H1 (cell line): ENCODE measurements at regions of chr11 and their contacts with region 1.

Region 1: DNA sequence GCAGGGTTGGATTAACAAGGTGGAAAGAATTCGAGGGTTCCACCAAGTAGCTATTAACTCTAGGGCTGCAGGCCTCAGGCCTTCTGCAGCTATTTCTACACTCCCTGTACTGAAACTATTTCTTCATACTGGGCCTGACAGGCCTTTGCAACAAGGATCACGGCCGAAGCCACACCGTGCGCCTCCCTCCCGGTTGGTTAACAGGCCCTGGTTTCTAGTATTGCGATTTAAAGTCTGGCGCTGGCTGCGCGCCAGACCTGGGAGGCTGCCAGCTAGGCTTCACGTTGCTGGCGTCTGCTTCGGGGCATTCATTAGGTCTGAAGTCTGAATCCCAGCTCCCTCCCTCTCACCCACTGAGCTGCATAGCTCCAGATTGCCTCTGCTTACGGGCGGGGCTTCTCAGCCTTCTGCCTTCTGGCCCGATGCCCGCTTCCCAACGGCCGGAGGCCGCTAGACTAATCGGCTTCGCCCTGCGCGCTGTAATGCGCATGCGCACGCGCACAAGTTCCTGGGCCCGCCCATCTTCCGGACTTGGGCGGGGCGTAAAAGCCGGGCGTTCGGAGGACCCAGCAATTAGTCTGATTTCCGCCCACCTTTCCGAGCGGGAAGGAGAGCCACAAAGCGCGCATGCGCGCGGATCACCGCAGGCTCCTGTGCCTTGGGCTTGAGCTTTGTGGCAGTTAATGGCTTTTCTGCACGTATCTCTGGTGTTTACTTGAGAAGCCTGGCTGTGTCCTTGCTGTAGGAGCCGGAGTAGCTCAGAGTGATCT is 1.6 kb downstream of the LDHA start:
- DNase-seq: peak; percentile 98 to 99
- H3K4me3 ChIP-seq: peak overlapping the region; percentile 76 to 87 (median 80)
- H3K27ac ChIP-seq: 0 out of 2 replicates have a peak overlapping the region, but pooled peaks have one; percentile 45
- H3K4me1 ChIP-seq: peaks cover 3 to 6% (median 5%) of the 10 kb centered on the region in 4 experiments; a peak in 6 of 7 replicates
- H3K27me3 ChIP-seq: peaks cover 0 to 4% (median 0%) of the 10 kb centered on the region in 4 experiments; a peak in 2 of 7 replicates
- CTCF ChIP-seq: no peak
- EP300 ChIP-seq: no peak
- POLR2A ChIP-seq: peak; percentile 47 to 67; a peak in 2 of 3 replicates
- RAD21 ChIP-seq: no peak

Region 2: GRCh38 chr11:18321980-18322711 is 73.8 kb before region 1 on chr11 and contains the starts of genes GTF2H1 and HPS5:
- CTCF ChIA-PET with region 1: no interaction called
- POLR2A ChIA-PET with region 1: interaction called, 24 read pairs
- DNase-seq: peak; percentile 91 to 96
- H3K4me3 ChIP-seq: peak within 1 kb of the TSS; percentile 75 to 92 (median 86)
- H3K27ac ChIP-seq: peak within 1 kb of the TSS; percentile 100
- H3K4me1 ChIP-seq: no peaks in the 10 kb centered on the region; a peak in 2 of 7 replicates
- H3K27me3 ChIP-seq: no peaks in the 10 kb centered on the region
- CTCF ChIP-seq: no peak
- EP300 ChIP-seq: no peak
- POLR2A ChIP-seq: peak; percentile 91 to 99
- RAD21 ChIP-seq: no peak
- total RNA-seq, gene GTF2H1: 26.3 and 28.0 TPM in 2 replicates
- total RNA-seq, gene HPS5: 16.7 and 18.5 TPM in 2 replicates

Region 3: GRCh38 chr11:18374956-18375355 is 21.0 kb before region 1 on chr11:
- CTCF ChIA-PET with region 1: no interaction called
- POLR2A ChIA-PET with region 1: interaction called, 11 read pairs
- DNase-seq: no peak
- H3K4me3 ChIP-seq: no peak overlapping the region
- H3K27ac ChIP-seq: no peak overlapping the region
- H3K4me1 ChIP-seq: no peaks in the 10 kb centered on the region
- H3K27me3 ChIP-seq: no peaks in the 10 kb centered on the region
- CTCF ChIP-seq: no peak
- EP300 ChIP-seq: no peak
- POLR2A ChIP-seq: no peak
- RAD21 ChIP-seq: no peak

Region 4: GRCh38 chr11:18383388-18384156 is 12.3 kb before region 1 on chr11:
- CTCF ChIA-PET with region 1: interaction called, 11 read pairs
- POLR2A ChIA-PET with region 1: interaction called, 26 read pairs
- DNase-seq: no peak
- H3K4me3 ChIP-seq: no peak overlapping the region
- H3K27ac ChIP-seq: no peak overlapping the region
- H3K4me1 ChIP-seq: peaks cover 0 to 7% (median 3%) of the 10 kb centered on the region in 4 experiments; a peak in 1 of 7 replicates
- H3K27me3 ChIP-seq: no peaks in the 10 kb centered on the region
- CTCF ChIP-seq: no peak
- EP300 ChIP-seq: no peak
- POLR2A ChIP-seq: no peak
- RAD21 ChIP-seq: no peak

Region 5: GRCh38 chr11:18408558-18409242 is 12.8 kb after region 1 on chr11:
- CTCF ChIA-PET with region 1: interaction called, 12 read pairs
- POLR2A ChIA-PET with region 1: interaction called, 7 read pairs
- DNase-seq: no peak
- H3K4me3 ChIP-seq: no peak overlapping the region
- H3K27ac ChIP-seq: no peak overlapping the region
- H3K4me1 ChIP-seq: peaks cover 0 to 3% (median 0%) of the 10 kb centered on the region in 4 experiments; a peak in 2 of 7 replicates
- H3K27me3 ChIP-seq: peaks cover 0 to 9% (median 5%) of the 10 kb centered on the region in 4 experiments; a peak in 4 of 7 replicates
- CTCF ChIP-seq: no peak
- EP300 ChIP-seq: no peak
- POLR2A ChIP-seq: no peak
- RAD21 ChIP-seq: no peak